PC-3 (cell line): ENCODE measurements at regions of chr12 and their contacts with region 1.

Region 1: GRCh38 chr12:68310370-68310769 is 21.8 kb downstream of the MDM1 start:
- DNase-seq: peak; percentile 76
- ATAC-seq: peak; percentile 99
- H3K4me3 ChIP-seq: no peak overlapping the region
- H3K27ac ChIP-seq: peak overlapping the region; percentile 66
- H3K4me1 ChIP-seq: peaks cover 15% of the 10 kb centered on the region
- H3K27me3 ChIP-seq: no peaks in the 10 kb centered on the region
- CTCF ChIP-seq: no peak

Region 2: DNA sequence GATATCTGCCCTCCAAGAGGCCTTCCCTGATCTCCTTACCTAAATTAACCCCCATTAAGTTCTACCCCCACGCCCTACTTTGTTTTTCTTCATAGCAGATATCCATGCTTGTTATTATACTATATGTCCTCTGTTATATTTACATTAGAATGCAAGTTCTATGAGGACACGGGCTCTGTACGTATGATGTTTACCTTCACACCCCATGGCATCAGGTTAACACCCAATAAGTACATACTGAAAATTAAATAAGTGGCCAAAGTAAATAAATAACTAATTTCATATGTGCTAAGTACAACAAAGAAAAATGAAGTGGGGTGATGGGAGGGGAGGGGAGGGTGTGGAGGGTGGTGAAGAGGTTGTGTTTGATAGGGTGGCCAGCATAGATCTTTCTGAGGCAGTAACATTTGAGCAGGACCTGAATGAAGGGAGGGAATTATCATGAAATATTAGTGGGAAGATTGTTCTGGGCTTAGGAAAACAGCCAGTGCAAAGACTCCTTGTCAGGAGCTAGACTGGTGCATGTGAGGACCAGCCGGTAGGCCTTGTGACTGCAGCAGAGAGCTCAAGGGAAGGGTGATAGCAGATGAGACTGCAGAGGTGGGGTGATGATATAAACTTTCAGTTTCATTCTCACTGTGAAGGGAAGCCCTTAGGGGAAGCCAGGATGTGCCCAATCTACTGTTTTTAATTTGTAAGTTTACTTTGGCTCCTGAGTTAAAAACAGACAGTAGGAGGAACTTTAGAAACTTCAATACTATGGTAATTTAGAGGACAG is 69.6 kb before region 1 on chr12:
- CTCF ChIA-PET with region 1: interaction called, 3 read pairs
- POLR2A ChIA-PET with region 1: no interaction called
- intact Hi-C with region 1: loop called (anchors 1 kb)
- DNase-seq: peak; percentile 8
- ATAC-seq: peak; percentile 14; the same call in 1 of the 2 replicates
- H3K4me3 ChIP-seq: no peak overlapping the region
- H3K27ac ChIP-seq: peak overlapping the region; percentile 87
- H3K4me1 ChIP-seq: peaks cover 28% of the 10 kb centered on the region
- H3K27me3 ChIP-seq: no peaks in the 10 kb centered on the region
- CTCF ChIP-seq: no peak

Region 3: DNA sequence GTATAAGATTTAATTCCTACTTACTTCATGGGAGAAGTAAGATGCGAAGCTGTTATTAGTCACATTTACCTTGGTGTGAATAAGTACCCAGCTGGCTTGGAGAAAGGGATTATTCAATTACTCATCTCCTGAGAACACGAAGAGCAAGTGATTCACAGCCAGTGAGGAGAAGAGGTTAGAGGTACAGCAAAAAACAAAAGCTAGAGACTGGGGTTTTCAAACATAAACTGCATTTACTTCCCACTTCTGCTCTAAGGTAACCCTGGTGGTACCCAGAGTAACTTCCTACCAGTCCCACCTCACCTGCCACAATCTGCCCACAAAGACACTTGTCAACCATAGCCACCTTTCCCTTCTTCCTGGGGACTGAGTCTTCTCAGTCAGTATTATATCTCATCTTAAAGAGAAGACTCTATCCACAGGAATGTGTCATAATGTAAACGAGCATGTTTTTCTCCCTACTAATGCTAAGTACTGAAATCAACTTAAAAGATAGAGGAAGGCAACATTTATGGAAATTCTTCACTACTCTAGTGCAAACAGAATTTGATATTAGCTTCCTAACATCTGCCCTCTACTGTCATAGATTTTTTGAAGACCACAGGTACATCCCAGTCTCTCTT is 50.9 kb before region 1 on chr12:
- CTCF ChIA-PET with region 1: no interaction called
- POLR2A ChIA-PET with region 1: no interaction called
- intact Hi-C with region 1: no loop called
- DNase-seq: peak; percentile 89
- ATAC-seq: peak; percentile 96
- H3K4me3 ChIP-seq: peak overlapping the region; percentile 47
- H3K27ac ChIP-seq: peak overlapping the region; percentile 96
- H3K4me1 ChIP-seq: peaks cover 22% of the 10 kb centered on the region
- H3K27me3 ChIP-seq: no peaks in the 10 kb centered on the region
- CTCF ChIP-seq: peak; percentile 38; the same call in 1 of the 2 replicates

Region 4: DNA sequence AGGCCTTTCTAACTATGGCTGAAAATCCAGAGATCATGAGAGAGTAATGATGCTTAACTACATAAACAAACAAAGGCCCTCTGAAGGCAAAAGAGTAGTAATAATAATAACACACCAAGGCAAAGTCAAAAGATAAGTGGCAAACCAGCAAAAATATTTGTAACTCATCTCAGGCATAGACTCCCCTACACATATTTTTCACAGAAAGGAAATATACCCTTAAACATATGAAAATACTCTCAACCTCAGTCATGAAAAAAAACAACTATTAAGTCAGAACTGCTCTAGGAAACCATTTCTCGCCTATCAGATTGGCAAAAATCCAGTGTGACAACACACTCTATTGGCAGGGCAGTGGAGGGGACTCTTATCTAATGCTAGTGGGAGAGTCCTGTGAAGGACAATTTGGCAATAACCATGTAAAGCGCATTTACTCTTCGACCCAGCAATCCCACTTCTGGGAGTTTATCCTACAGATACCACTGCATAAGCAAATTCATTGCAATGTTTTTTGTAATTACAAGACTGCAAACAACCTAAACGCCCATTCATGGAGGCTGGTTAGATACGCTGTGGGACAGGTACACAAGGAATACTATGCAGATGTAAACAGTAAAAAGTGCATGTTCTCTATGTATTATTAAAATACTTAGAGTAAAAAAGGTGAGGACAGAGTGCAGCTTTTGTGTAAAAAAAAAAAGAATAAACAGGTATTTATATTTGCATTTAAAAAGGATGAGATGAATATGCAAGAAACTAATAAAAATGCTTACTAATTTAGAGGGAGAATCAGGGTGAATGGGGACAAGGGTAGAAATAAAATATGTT is 30.9 kb before region 1 on chr12:
- CTCF ChIA-PET with region 1: no interaction called
- POLR2A ChIA-PET with region 1: no interaction called
- intact Hi-C with region 1: loop called (anchors 5 kb)
- DNase-seq: no peak
- ATAC-seq: no peak
- H3K4me3 ChIP-seq: no peak overlapping the region
- H3K27ac ChIP-seq: no peak overlapping the region
- H3K4me1 ChIP-seq: peaks cover 21% of the 10 kb centered on the region
- H3K27me3 ChIP-seq: no peaks in the 10 kb centered on the region
- CTCF ChIP-seq: no peak

Region 5: DNA sequence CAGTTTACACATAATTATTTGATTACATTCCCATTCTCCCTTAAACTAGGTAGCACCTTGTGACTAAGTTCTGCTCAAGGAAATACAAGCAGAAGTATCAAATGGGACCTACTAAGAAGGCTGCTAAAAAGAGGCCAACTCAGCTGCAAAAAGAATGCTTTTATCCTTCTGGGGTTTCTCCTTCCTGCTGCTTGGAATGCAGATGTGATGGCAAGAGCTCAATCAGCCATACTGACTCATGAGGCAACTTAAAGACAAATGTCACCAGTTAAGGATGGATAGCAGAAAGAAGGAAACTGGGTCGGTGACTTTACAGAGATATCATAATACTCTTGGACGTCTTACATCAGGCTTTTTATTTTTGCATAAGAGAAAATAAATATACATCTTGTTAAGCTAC is 262.3 kb after region 1 on chr12:
- CTCF ChIA-PET with region 1: no interaction called
- POLR2A ChIA-PET with region 1: no interaction called
- intact Hi-C with region 1: no loop called
- DNase-seq: no peak
- ATAC-seq: no peak
- H3K4me3 ChIP-seq: no peak overlapping the region
- H3K27ac ChIP-seq: no peak overlapping the region
- H3K4me1 ChIP-seq: peaks cover 7% of the 10 kb centered on the region; the same call in 1 of the 2 replicates
- H3K27me3 ChIP-seq: no peaks in the 10 kb centered on the region
- CTCF ChIP-seq: no peak

Region 6: GRCh38 chr12:68641138-68641537 is 330.8 kb after region 1 on chr12:
- CTCF ChIA-PET with region 1: no interaction called
- POLR2A ChIA-PET with region 1: no interaction called
- intact Hi-C with region 1: no loop called
- DNase-seq: no peak
- ATAC-seq: no peak
- H3K4me3 ChIP-seq: no peak overlapping the region
- H3K27ac ChIP-seq: no peak overlapping the region
- H3K4me1 ChIP-seq: no peaks in the 10 kb centered on the region
- H3K27me3 ChIP-seq: no peaks in the 10 kb centered on the region
- CTCF ChIP-seq: no peak